Esophagus squamous epithelium (tissue), 5 donors: ENCODE measurements at regions of chr1 and their contacts with region 1.

Region 1: GRCh38 chr1:65243491-65243890 is 65.9 kb upstream of the DNAJC6 start:
- DNase-seq: no peak
- H3K4me3 ChIP-seq: no peak overlapping the region
- H3K27ac ChIP-seq: no peak overlapping the region
- H3K4me1 ChIP-seq: peaks cover 0 to 4% (median 0%) of the 10 kb centered on the region in 3 donors
- H3K27me3 ChIP-seq: peaks cover 0 to 8% (median 0%) of the 10 kb centered on the region in 4 donors
- CTCF ChIP-seq: no peak
- POLR2A ChIP-seq: no peak

Region 2: GRCh38 chr1:65075123-65075976 is 168.1 kb before region 1 on chr1:
- intact Hi-C with region 1: no loop called
- DNase-seq: no peak
- H3K4me3 ChIP-seq: no peak overlapping the region
- H3K27ac ChIP-seq: no peak overlapping the region
- H3K4me1 ChIP-seq: no peaks in the 10 kb centered on the region
- H3K27me3 ChIP-seq: no peaks in the 10 kb centered on the region
- CTCF ChIP-seq: peak; percentile 39 to 75 (median 58)
- POLR2A ChIP-seq: no peak

Region 3: GRCh38 chr1:65687428-65688214 is 444.1 kb after region 1 on chr1:
- intact Hi-C with region 1: loop called (anchors 5 kb)
- DNase-seq: no peak
- H3K4me3 ChIP-seq: no peak overlapping the region
- H3K27ac ChIP-seq: no peak overlapping the region
- H3K4me1 ChIP-seq: peaks cover 0 to 25% (median 0%) of the 10 kb centered on the region in 3 donors
- H3K27me3 ChIP-seq: peaks cover 0 to 5% (median 0%) of the 10 kb centered on the region in 4 donors
- CTCF ChIP-seq: peak; percentile 79 to 95 (median 94)
- POLR2A ChIP-seq: no peak